Left colon (tissue), 2 donors: ENCODE measurements at regions of chr9 and their contacts with region 1.

Region 1: GRCh38 chr9:14347406-14348122 is 33.6 kb upstream of the NFIB start:
- DNase-seq: peak in 1 of 2 donors; percentile 51
- ATAC-seq: peak; percentile 56

Region 2: DNA sequence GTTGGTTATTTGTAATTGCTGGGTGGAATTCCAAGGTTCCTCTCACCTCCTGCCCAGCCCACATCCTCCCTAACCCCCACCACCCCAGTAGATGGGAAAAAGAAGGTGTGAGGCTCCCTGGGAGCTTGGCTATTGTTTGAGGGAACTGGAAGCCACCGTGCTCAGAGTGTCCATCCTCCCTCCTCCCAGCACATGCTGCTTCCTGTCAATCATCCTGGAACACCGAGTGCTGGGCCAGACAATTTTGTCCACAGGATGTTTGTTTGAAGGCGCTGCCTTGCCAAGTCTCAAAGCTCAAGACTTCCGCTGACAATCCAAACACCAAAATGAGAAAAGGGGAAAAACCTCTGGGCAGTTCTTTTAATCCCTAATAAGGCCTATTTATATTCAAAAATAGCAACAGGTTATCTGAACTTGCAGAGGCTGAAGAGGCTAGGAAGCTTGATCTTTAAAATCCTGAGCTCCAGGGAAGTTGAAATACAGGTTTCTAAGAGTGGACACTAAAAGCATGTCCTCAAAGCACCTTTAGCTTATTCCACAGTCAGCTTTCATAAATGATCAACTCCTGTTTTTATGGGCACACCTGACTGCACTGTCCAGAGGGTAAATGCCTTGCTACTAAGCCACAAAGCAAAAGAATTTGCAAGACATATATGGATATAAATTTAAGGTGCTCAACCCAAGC is 320.3 kb before region 1 on chr9:
- intact Hi-C with region 1: loop called in 1 of 2 experiments (anchors 10 kb)
- DNase-seq: peak; percentile 21 to 61
- ATAC-seq: peak; percentile 96

Region 3: DNA sequence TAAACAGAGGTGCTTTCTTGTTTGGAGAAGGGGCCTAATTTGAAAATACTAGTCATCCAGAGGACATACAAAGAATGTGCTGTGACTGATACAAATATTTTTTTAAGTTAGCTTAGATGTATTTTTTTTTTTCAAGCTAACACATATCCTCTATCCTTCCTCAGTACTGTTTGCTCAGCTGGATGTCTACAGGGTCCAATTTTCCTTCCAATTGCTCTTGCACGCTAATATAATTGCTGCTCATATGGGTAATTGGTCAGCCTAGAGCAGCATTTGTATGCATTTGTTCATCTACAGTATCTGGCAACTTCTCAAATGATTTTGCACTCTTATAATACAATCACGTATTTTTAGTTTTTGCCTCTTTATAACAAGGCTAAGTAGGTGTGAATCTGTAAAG is 261.0 kb after region 1 on chr9:
- intact Hi-C with region 1: no loop called
- DNase-seq: no peak
- ATAC-seq: no peak